Endothelial cell of umbilical vein (primary cell): ENCODE measurements at regions of chr6 and their contacts with region 1.

Region 1: DNA sequence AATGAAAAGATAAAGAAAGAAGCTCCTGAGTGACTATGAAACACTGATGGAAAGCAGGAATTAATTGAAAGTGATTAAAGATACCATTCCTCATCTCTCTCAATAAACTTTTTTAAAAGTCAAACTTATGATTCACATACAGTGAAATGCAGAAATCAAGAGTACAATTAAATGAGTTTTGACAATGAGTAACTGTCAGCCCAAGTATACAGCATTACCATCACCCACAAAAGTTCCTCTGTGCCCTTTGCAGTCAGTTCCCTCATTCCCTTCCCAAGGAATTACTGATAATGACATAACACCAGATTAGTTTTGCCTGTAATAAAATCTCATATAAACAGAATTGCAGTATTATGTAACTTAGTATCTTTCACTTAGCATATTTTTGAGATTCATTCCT is 44.5 kb downstream of the ATG5 start:
- DNase-seq: no peak
- H3K4me3 ChIP-seq: no peak overlapping the region
- H3K27ac ChIP-seq: no peak overlapping the region
- H3K4me1 ChIP-seq: no peaks in the 10 kb centered on the region
- H3K27me3 ChIP-seq: no peaks in the 10 kb centered on the region
- CTCF ChIP-seq: no peak
- POLR2A ChIP-seq: no peak

Region 2: DNA sequence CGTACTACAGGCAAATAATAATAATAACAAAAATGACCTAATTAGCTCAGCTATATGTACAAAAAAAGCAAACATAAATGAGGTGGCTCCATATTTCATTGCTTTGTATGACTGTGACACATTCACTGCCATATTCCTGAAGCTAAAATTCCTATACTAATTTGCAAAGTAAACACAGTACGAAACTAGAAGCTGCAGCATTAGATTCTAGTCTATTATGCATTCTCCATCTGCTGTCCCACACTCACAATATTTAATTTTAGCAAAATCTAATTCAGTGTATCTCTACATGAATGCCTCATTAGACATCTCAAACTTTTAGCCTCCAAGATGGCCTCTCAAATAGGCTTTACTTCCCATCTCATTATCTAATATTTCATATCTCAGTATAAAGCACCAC is 10.7 kb before region 1 on chr6:
- CTCF ChIA-PET with region 1: interaction called, 11 read pairs
- POLR2A ChIA-PET with region 1: no interaction called
- dilution Hi-C with region 1: no loop called
- intact Hi-C with region 1: no loop called
- DNase-seq: no peak
- H3K4me3 ChIP-seq: no peak overlapping the region
- H3K27ac ChIP-seq: no peak overlapping the region
- H3K4me1 ChIP-seq: no peaks in the 10 kb centered on the region
- H3K27me3 ChIP-seq: no peaks in the 10 kb centered on the region
- CTCF ChIP-seq: no peak
- POLR2A ChIP-seq: no peak

Region 3: DNA sequence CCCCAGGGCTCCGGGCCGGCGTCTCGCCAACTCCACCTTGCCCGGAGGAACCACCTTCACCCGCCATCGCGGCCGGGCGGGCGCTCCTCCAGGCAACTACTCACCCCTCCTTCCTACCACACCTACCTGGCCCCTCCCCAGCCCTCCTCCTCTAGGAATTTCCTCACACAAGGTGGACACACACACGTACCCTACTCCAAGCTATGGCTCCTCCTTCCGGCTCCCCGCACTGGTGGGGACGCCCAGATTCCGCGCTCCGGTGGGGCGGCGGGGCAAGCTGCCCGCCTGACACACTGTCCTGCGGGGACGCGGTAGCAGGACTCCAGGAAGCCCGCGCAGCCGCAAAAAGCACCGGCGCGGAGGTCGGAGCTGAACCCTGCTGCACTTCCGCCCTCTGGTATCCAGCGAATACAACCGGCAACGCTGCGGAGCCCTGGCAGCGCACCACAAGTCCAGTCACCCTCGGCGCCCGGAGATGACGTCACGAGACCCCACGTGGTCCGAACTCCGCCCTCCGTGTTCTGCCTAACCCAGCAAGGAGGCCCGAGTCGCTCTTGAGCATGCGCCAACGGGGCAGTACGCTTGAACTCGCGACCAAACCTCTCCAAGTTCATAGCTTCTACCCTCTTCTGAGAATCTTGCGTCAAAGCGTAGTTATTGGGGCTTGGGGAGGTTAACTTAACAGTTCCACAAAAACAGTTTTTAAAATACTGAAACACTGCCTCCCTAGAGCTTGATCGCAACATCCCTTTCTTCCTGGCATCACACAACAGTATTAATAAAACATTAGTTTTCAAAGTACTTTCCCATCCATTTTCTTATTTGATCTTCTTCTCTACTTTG is 44.5 kb after region 1 on chr6 and contains the start of gene ATG5:
- CTCF ChIA-PET with region 1: no interaction called
- POLR2A ChIA-PET with region 1: no interaction called
- dilution Hi-C with region 1: no loop called
- intact Hi-C with region 1: no loop called
- DNase-seq: peak; percentile 99
- H3K4me3 ChIP-seq: peak within 1 kb of the TSS; percentile 81 to 93 (median 84)
- H3K27ac ChIP-seq: peak within 1 kb of the TSS; percentile 77
- H3K4me1 ChIP-seq: peaks cover 6% of the 10 kb centered on the region
- H3K27me3 ChIP-seq: peaks cover 2 to 13% of the 10 kb centered on the region in 2 experiments
- CTCF ChIP-seq: no peak
- POLR2A ChIP-seq: peak; percentile 79
- total RNA-seq, gene ATG5: 32.8 and 35.9 TPM in 2 replicates

Region 4: DNA sequence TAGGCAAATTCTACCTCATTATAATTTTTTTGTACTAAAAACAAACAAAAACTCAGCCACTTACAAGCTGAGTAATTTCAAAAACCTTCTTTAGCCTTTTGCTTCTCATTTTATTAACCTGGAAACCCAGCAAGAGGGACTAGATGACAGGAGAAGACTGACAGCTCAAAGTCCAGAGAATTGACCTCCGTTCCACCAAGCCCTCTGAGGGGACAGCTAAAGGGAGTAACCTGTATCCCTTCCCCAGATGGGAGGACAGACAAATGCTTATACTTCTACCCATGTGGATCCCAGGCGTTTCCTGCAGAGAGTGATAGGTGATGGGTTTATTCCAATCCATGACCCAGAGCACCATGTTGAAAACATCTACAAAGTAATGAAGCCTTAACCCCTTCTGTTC is 728.4 kb after region 1 on chr6:
- CTCF ChIA-PET with region 1: no interaction called
- POLR2A ChIA-PET with region 1: no interaction called
- dilution Hi-C with region 1: no loop called
- intact Hi-C with region 1: no loop called
- DNase-seq: no peak
- H3K4me3 ChIP-seq: no peak overlapping the region
- H3K27ac ChIP-seq: no peak overlapping the region
- H3K4me1 ChIP-seq: no peaks in the 10 kb centered on the region
- H3K27me3 ChIP-seq: no peaks in the 10 kb centered on the region
- CTCF ChIP-seq: no peak
- POLR2A ChIP-seq: no peak